Natural killer cell (primary cell): ENCODE measurements at regions of chr1 and their contacts with region 1.

Region 1: GRCh38 chr1:111222308-111223125 is 5.0 kb upstream of the CHI3L2 start:
- DNase-seq: peak; percentile 76 to 90
- ATAC-seq: peak; percentile 29 to 67 (median 60)
- H3K4me3 ChIP-seq: peak overlapping the region; percentile 0
- H3K4me3 Mint-ChIP-seq: peak overlapping the region; percentile 86
- H3K27ac ChIP-seq: peak overlapping the region; percentile 80
- H3K27ac Mint-ChIP-seq: peak overlapping the region; percentile 94 to 95
- H3K4me1 ChIP-seq: peaks cover 87% of the 10 kb centered on the region
- H3K4me1 Mint-ChIP-seq: peaks cover 90 to 93% of the 10 kb centered on the region in 2 donors
- H3K27me3 ChIP-seq: no peaks in the 10 kb centered on the region
- H3K27me3 Mint-ChIP-seq: no peaks in the 10 kb centered on the region
- CTCF ChIP-seq: peak; percentile 89

Region 2: DNA sequence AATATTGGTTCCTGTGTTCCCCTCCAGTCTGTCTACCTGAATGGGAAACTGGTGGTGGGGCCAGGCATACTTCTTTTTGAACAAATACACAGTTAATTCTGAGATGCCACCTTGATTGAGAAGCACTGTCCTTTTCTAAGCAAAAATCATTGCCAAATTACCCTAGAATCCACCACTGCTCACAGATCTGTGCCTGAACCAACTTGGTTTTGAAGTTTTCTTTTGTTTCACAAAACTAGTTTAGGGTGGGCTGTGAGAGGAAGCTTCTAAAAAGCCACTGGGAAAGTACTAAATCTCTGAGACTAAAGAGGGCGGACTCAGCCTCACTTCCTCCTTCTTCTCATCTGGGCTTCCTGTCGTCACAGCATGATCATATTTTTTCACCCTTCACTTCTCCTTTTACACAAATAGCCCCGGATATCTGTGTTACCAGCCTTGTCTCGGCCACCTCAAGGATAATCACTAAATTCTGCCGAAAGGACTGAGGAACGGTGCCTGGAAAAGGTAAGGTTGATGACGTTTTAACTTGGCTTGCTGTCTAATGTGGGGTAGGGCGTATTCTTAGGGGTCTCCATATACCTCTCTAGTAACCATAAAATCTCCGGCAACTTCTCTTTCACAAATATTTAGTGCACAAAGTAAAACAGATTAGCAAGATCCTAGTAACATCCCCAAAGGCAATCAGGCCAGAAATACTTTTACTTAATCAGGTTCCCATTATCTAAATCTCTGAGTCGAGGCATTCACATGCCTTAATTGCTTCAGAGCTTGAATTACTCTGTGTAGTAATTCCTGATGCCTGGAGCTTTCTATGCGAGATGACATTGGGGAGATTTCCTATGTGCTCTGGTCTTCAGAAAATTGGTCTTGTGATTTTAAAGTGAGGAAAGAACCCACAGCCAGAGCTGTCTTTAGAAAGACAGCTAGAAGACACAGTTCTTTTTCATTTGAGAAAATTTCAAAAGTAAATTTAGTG is 349.5 kb before region 1 on chr1 and contains the start of gene CD53:
- intact Hi-C with region 1: loop called (anchors 5 kb)
- DNase-seq: peak; percentile 46 to 88
- ATAC-seq: peak; percentile 63 to 82 (median 78)
- H3K4me3 ChIP-seq: peak within 1 kb of the TSS; percentile 71
- H3K4me3 Mint-ChIP-seq: peak within 1 kb of the TSS; percentile 99
- H3K27ac ChIP-seq: peak within 1 kb of the TSS; percentile 94
- H3K27ac Mint-ChIP-seq: peak within 1 kb of the TSS; percentile 92 to 99
- H3K4me1 ChIP-seq: peaks cover 22% of the 10 kb centered on the region
- H3K4me1 Mint-ChIP-seq: peaks cover 48 to 77% of the 10 kb centered on the region in 2 donors
- H3K27me3 ChIP-seq: no peaks in the 10 kb centered on the region
- H3K27me3 Mint-ChIP-seq: no peaks in the 10 kb centered on the region
- CTCF ChIP-seq: no peak
- total RNA-seq, gene CD53: 522 to 584 (median 541) TPM

Region 3: DNA sequence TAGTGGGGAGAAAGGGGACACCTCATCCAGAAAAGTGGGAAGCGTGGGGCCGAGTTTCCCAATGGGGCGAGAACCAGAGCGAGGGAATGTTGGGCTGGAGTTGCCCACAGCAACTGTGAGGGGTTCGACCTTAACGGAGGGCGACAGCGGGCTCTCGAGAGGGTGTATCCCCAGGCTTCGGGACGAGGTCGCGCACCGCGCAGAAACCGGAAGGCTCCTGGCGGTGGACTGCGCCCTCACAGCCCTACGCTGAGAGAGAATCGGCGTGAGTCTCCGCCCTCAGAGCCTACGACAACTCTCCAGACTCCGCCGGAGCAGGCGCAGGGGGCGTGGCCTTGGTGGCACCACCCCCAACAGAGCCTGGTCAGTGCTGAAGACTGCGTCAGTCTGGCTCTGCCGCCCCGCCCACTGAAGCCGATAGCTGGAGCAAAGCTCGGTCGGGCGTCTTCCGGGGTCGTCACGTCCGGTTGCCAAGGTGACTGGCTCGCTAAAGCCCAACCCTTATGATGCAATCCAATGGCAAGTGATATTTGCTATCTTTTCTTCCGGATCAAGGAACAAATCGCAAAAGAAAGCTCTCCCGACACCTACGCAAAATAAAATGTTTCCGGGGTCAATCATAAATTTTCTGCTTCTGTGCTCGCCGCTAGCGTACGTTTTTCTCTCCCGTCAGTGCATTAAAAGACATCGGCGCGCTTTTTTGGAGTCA is 258.7 kb before region 1 on chr1 and contains the start of gene LRIF1:
- intact Hi-C with region 1: loop called (anchors 5 kb)
- DNase-seq: peak; percentile 100
- ATAC-seq: peak; percentile 91 to 99 (median 92)
- H3K4me3 ChIP-seq: peak within 1 kb of the TSS; percentile 93
- H3K4me3 Mint-ChIP-seq: peak within 1 kb of the TSS; percentile 90
- H3K27ac ChIP-seq: peak within 1 kb of the TSS; percentile 95
- H3K27ac Mint-ChIP-seq: peak within 1 kb of the TSS; percentile 91 to 99
- H3K4me1 ChIP-seq: peaks cover 11% of the 10 kb centered on the region
- H3K4me1 Mint-ChIP-seq: peaks cover 41 to 43% of the 10 kb centered on the region in 2 donors
- H3K27me3 ChIP-seq: peaks cover 10% of the 10 kb centered on the region
- H3K27me3 Mint-ChIP-seq: peaks cover 10 to 15% of the 10 kb centered on the region in 2 donors
- CTCF ChIP-seq: no peak
- total RNA-seq, gene LRIF1: 8.9 to 12.5 (median 10.4) TPM

Region 4: GRCh38 chr1:111334169-111334568 is 111.7 kb after region 1 on chr1:
- intact Hi-C with region 1: loop called (anchors 1 kb)
- DNase-seq: peak in 1 of 2 donors; percentile 85
- ATAC-seq: peak in 2 of 3 donors; percentile 82 to 86
- H3K4me3 ChIP-seq: no peak overlapping the region
- H3K4me3 Mint-ChIP-seq: no peak overlapping the region
- H3K27ac ChIP-seq: no peak overlapping the region
- H3K27ac Mint-ChIP-seq: no peak overlapping the region
- H3K4me1 ChIP-seq: no peaks in the 10 kb centered on the region
- H3K4me1 Mint-ChIP-seq: peaks cover 0 to 5% of the 10 kb centered on the region in 2 donors
- H3K27me3 ChIP-seq: no peaks in the 10 kb centered on the region
- H3K27me3 Mint-ChIP-seq: peaks cover 0 to 11% of the 10 kb centered on the region in 2 donors
- CTCF ChIP-seq: peak; percentile 74

Region 5: DNA sequence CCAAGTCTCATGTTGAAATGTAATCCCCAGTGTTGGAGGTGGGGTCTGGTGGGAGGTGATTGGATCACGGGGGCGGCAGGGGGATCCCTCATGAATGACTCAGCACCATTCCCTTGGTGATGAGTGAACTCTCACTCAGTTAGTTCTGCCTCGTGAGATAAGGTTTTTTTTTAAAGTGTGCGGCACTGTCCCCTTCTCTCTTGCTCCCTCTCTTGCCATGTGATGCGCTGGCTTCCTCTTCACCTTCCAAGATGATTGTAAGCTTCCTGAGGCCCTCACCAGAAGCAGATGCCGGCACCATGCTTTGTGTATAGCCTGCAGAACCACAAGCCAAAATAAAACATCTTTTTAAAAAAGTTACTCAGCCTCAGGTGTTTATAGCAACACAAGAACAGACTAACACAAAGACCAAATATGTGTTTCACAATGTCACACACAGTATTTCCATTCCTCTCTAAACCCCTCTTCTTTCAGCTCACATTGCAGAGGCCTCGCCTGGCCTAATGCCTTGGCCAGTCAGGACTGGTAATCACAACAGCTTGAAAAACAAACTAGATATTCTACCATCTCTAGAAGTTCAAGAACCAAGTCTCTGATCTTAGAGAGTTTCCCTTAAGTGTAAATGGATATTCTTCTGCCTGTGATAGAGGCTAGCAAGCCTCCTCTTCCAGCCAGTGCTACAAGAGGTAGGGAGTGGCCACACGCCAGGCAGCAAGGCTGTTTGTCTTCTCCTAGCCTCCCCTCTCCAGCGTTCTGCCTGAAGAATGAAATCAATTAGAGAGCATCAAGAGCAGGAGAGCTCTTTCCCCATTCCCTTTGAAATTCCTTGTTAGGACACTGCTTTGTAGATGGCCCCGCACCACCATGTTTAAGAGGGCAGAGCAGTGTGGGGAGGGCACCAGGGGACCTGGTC is 377.5 kb after region 1 on chr1:
- intact Hi-C with region 1: loop called (anchors 5 kb)
- DNase-seq: no peak
- ATAC-seq: no peak
- H3K4me3 ChIP-seq: no peak overlapping the region
- H3K4me3 Mint-ChIP-seq: no peak overlapping the region
- H3K27ac ChIP-seq: no peak overlapping the region
- H3K27ac Mint-ChIP-seq: peak overlapping the region; percentile 45 to 78
- H3K4me1 ChIP-seq: peaks cover 69% of the 10 kb centered on the region
- H3K4me1 Mint-ChIP-seq: peaks cover 78 to 85% of the 10 kb centered on the region in 2 donors
- H3K27me3 ChIP-seq: no peaks in the 10 kb centered on the region
- H3K27me3 Mint-ChIP-seq: no peaks in the 10 kb centered on the region
- CTCF ChIP-seq: no peak